Head of caudate nucleus (tissue), 42 donors: ENCODE measurements at regions of chr16 and their contacts with region 1.

Region 1: DNA sequence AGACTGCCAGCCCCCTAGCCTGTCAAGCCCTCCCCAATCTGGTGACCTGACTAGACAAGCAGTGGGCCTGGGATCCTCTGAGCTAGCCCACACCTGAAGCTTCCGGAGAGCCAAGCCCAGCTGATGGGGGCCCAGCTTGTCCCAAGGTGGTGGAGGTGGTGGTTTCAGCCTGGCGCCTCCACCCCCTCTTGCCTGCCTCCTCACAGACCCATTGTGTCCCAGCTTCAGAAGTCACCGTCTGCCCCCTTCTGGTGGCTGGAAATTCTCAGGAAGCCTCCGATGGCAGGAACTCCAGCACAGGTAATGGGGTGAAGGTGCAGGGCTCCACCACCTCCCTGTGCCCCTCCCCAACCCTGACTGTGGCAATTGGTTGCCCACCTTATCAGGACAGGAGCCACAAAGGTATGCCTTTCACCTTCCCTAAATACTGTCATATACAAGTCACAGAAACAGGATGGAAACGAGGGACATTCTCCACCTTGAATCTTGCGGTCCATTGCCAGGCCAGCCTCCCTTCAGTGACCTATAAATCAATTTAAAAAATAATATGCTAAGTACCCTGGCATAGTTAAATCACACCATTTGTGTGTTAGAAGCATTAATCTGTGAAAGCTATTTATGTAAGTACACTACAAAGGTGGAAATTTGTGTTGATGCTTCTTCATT is 66.0 kb upstream of the ZNF423 start:
- DNase-seq: peak; percentile 26 to 79 (median 58)

Region 2: GRCh38 chr16:49399594-49400364 is 522.1 kb before region 1 on chr16:
- intact Hi-C with region 1: loop called (anchors 5 kb)
- DNase-seq: peak in 1 of 42 donors; percentile 15

Region 3: GRCh38 chr16:49811644-49812334 is 110.1 kb before region 1 on chr16:
- intact Hi-C with region 1: no loop called
- DNase-seq: peak in 40 of 42 donors; percentile 18 to 80 (median 54)